ENCODE measurements at regions of chr18 and their contacts with region 1.

Region 1: GRCh38 chr18:3129053-3129864 is 90.5 kb downstream of the MYOM1 start:
- DNase-seq: peak; percentile 70
- H3K4me3 Mint-ChIP-seq: no peak overlapping the region
- H3K27ac Mint-ChIP-seq: peak overlapping the region; percentile 27
- H3K4me1 Mint-ChIP-seq: peaks cover 10% of the 10 kb centered on the region
- H3K27me3 Mint-ChIP-seq: peaks cover 3% of the 10 kb centered on the region

Region 2: DNA sequence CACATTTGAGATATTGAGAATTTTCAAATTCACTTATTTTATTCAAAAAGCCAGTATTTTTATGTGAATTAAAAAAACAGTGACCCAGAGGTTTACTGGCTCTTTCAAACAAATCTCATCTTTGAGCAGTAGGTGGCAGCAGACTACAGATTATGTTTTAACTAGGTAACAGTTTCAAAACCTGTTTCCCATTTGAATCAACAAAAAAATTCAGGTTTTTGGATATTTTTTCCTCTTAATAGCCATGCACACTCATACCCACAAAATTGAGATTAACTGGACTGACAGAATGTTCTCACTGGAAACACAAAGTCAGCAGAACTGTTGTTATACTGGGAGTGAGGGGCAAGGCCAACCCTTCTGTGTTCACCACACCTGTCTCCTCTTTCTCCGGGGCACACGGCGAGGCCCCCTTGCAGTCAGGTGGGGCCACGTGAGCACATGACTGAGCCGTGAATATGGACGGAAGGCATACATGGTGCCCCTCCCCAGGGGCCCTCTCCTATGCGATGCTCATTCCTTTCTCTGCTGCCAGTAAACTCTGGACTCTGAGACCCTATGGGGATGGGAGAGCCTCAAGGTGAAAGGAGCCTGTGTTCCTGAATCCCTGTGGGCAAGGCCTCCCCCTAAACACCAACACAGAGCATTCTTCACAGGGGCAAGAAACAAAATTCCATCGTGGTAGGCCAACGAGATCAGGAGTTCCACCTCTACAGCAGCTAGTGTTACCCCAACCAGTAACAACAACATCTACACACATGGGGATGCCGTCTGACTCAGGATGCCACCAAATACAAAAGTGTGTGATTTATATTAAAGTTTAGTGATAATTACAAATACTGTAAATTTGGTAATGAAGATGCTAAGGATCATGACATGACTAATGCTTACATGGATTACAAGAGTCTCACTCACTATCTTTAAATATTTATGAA is 196.7 kb before region 1 on chr18:
- intact Hi-C with region 1: loop called (anchors 1 kb)
- DNase-seq: peak; percentile 29
- H3K4me3 Mint-ChIP-seq: no peak overlapping the region
- H3K27ac Mint-ChIP-seq: peak overlapping the region; percentile 82
- H3K4me1 Mint-ChIP-seq: peaks cover 38% of the 10 kb centered on the region
- H3K27me3 Mint-ChIP-seq: no peaks in the 10 kb centered on the region

Region 3: DNA sequence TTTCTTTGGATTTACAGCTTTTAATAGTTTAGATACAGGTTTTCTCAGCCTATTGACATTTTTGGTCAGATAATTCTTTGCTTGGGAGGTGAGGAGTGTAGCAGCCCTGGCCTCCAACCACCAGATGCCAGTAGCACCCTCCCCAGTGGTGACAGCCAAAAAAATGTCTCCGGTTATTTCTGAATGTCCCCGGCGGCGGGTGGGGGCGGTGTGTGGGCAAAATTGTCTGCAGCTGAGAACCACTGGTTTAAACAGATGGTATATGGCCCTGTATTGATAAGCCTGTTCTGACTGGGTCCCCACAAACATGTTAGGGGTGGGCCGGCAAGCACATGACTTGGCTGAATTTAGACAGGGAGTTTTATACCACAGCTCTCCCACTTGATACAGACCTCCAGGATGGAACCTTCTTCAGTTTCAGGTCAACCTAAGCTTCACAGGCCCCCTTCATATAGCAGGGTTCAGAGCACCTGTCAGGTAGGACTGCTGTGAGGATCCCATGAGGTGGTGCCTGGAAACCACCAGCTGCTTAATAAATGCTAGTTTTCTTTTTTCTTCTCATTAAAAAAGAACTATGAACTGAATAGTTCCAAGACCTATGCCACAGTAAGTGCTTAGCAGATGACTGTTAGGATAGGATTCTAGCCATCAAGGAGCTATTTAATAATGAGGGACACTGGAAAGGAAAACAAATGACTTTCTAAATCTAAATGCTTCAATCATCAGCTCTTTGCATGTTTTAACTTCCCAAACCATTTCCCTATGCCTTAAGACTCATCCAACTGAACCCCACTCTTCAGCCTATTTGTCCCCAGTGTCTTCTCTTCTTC is 134.4 kb before region 1 on chr18:
- intact Hi-C with region 1: loop called (anchors 1 kb)
- DNase-seq: peak; percentile 58
- H3K4me3 Mint-ChIP-seq: peak overlapping the region; percentile 60
- H3K27ac Mint-ChIP-seq: peak overlapping the region; percentile 83
- H3K4me1 Mint-ChIP-seq: peaks cover 82% of the 10 kb centered on the region
- H3K27me3 Mint-ChIP-seq: no peaks in the 10 kb centered on the region

Region 4: DNA sequence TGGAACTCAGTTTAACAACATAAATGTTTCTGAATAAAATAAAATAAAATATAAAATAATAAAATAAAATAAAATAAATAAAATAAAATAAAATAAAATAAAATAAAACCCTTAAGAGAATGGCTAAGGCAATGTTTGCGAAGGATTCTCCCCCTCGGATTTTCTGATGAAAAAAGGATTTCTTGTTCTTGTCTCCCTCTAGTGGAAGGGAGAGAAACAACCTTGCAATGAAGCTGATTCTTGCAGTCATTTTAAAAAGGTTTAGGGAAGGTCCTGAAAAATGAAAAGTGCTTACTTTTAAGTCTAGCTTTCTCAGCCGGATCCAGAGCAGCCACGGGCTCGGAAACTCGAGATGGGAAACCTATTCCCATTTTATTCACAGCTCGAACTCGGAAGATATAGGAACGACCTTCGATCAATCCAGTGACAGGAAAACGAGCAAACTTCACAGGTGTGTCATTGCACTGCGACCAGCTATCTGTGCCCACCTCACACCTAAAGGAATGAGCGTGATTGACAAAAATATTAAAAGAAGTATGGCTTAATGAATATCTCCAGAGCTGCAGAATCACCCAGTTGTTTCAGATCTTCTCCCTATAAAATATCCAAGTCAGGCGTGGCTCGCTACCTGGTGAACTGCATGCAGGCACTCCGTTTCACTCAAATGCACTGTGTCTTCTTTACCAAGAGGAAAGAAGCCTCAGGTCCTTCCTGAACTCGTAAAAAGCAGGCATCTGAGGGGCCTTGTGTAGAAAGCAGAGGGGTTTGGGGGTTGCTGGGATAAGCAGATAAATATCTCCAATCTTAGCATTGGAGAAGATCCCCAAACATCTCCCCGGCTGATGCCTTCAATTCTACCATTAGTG is 22.4 kb after region 1 on chr18:
- intact Hi-C with region 1: loop called (anchors 2 kb)
- DNase-seq: no peak
- H3K4me3 Mint-ChIP-seq: no peak overlapping the region
- H3K27ac Mint-ChIP-seq: no peak overlapping the region
- H3K4me1 Mint-ChIP-seq: peaks cover 7% of the 10 kb centered on the region
- H3K27me3 Mint-ChIP-seq: peaks cover 7% of the 10 kb centered on the region

Region 5: GRCh38 chr18:3236458-3236857 is 107.2 kb after region 1 on chr18:
- intact Hi-C with region 1: no loop called
- DNase-seq: no peak
- H3K4me3 Mint-ChIP-seq: no peak overlapping the region
- H3K27ac Mint-ChIP-seq: no peak overlapping the region
- H3K4me1 Mint-ChIP-seq: no peaks in the 10 kb centered on the region
- H3K27me3 Mint-ChIP-seq: no peaks in the 10 kb centered on the region